Activated CD4-positive, alpha-beta T cell treated with anti-CD3 and anti-CD28 coated beads, Interleukin-2, amount 10 ng/mL, durations not matched to agents 7 days and 5 days (primary cell): ENCODE measurements at regions of chr5 and their contacts with region 1.

Region 1: DNA sequence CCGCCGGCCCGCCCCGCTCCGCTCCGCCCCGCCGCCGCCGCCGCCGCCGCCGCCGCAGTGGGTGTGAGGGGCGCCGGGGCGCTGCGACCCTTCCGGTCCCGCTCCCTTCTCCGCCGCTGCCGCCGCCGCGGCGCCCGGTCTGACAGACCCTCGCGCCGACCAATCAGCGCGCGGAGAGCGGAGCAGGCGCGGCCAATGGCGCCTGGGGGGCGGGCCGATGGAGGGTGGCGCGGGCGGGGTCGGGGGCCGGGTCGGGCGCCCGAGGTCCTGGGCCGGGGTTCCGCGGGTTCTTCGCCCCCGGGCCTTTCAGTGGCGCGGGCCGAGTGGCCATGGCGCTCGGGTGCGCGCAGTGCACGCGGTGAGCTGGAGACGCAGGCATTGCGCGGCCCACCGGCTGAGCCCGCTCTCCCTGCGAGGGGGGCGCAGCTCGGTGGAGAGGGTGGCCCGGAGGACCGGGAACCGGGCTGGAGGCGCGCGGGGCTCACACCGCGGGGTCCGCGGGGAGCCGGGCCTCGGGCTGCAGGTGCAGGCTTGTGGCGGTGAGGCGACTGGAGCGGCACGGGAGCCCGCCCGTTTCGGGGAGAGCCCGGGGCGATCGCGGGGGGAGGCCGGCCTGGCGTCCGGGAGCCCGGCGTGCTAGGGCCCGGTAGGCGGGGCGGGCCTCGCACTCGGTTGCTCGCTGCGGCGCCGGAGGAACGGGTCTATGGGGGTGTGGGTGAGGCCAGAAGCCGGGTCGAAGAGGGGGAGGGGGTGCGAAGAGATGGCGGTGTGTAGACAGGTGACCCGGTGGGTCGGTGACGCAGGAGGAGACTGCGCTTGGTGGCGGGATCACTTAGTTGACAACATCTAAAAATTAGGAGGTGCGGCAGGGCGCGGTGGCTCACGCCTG is at the start of gene MAPK9:
- DNase-seq: peak; percentile 83
- H3K4me3 Mint-ChIP-seq: peak within 1 kb of the TSS; percentile 95
- H3K27ac Mint-ChIP-seq: peak within 1 kb of the TSS; percentile 100
- H3K4me1 Mint-ChIP-seq: peaks cover 34% of the 10 kb centered on the region
- H3K27me3 Mint-ChIP-seq: no peaks in the 10 kb centered on the region
- total RNA-seq, gene MAPK9: 39.6 to 47.6 TPM

Region 2: GRCh38 chr5:180173875-180174586 is 118.2 kb before region 1 on chr5:
- CTCF ChIA-PET with region 1: no interaction called
- POLR2A ChIA-PET with region 1: no interaction called
- DNase-seq: no peak
- H3K4me3 Mint-ChIP-seq: no peak overlapping the region
- H3K27ac Mint-ChIP-seq: no peak overlapping the region
- H3K4me1 Mint-ChIP-seq: no peaks in the 10 kb centered on the region
- H3K27me3 Mint-ChIP-seq: no peaks in the 10 kb centered on the region

Region 3: DNA sequence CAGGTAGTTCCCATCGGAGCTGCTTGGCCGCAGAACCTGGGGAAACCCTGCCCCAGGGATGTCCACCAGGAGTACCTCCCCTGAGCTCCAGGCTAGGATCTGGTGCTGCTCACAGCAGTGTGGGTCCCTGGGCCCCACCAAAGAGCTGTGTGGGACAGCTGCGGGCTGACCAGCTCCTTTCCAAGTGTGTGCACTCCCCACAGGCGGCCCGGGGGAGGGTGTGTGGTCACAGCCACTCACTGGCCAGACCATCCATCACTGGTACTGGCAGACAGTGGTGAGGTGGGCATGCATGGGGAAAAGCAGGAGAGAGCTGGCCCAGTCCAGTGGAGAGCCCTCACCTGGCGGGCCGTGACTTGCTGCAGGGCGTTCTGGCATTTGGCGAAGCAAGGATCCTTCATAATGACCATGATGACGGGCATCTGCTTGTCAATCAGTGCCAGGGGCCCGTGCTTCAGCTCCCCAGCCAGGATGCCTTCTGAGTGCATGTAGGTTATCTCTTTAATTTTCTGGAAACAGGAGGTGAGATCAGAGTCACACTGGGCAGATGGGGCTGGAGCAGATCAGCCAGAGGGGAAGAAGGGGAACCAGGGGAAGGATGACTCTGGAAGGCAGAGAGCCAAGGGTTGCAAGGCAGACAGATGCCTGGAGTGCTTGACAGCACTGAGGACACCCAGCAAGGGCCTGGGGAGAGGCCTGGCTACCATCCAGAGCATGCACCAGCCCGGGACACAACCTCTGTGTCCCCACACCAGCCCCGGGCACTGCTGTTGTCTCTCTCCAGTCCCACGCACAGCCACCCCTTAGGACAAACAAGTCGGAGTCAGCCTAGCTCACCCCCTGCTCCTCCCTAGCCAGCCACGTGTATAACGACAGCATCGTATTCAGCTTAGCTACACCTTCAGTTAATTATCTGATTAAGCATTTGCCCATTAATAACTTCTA is 12.5 kb after region 1 on chr5:
- CTCF ChIA-PET with region 1: interaction called, 18 read pairs
- POLR2A ChIA-PET with region 1: no interaction called
- DNase-seq: no peak
- H3K4me3 Mint-ChIP-seq: no peak overlapping the region
- H3K27ac Mint-ChIP-seq: no peak overlapping the region
- H3K4me1 Mint-ChIP-seq: no peaks in the 10 kb centered on the region
- H3K27me3 Mint-ChIP-seq: no peaks in the 10 kb centered on the region

Region 4: GRCh38 chr5:180315762-180316212 is 23.6 kb after region 1 on chr5:
- CTCF ChIA-PET with region 1: interaction called, 40 read pairs
- POLR2A ChIA-PET with region 1: no interaction called
- DNase-seq: peak; percentile 74
- H3K4me3 Mint-ChIP-seq: no peak overlapping the region
- H3K27ac Mint-ChIP-seq: no peak overlapping the region
- H3K4me1 Mint-ChIP-seq: peaks cover 3% of the 10 kb centered on the region
- H3K27me3 Mint-ChIP-seq: no peaks in the 10 kb centered on the region

Region 5: DNA sequence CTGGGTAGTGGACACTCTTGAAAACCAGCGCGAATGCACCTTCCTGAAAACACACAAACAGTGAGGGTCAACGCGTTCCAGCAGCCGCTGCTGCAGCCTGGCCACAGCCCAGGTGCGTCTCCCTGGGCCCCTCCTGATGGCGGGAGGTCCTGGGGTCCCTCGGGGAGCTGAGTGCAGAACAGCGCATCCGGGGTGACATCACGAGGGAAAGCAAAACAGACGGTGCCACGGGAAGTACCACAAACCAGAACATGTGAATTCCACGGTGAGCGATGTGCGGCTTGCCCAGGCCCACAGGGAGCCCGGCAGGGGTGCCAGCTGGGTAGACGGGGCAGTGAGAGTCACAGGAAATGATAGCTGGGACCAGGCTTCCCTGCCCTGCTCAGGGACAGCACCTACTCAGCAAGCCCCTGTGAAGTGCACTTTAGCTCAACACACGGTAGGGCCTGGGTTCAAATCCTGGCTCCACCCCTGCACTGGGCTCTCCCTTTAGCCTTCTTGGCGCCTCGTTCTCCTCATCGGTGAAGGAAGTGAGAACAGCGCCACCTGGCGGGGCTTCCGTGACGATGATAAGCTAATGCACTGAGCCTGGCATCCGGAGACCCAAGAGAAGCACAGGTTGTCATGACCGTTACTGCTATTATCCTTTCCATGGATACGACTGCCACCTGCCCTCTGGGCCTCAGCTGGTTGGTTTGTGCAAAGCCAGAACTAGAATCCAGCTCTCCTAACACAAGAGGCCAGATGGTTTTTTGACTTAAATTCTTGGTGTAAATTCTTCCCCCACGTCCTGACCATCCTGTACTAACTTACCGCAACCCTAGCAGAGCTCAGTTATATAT is 36.3 kb after region 1 on chr5:
- CTCF ChIA-PET with region 1: interaction called, 18 read pairs
- POLR2A ChIA-PET with region 1: no interaction called
- DNase-seq: peak; percentile 88
- H3K4me3 Mint-ChIP-seq: no peak overlapping the region
- H3K27ac Mint-ChIP-seq: no peak overlapping the region
- H3K4me1 Mint-ChIP-seq: no peaks in the 10 kb centered on the region
- H3K27me3 Mint-ChIP-seq: peaks cover 7% of the 10 kb centered on the region